Left cardiac atrium (tissue), 4 donors: ENCODE measurements at regions of chr6 and their contacts with region 1.

Region 1: DNA sequence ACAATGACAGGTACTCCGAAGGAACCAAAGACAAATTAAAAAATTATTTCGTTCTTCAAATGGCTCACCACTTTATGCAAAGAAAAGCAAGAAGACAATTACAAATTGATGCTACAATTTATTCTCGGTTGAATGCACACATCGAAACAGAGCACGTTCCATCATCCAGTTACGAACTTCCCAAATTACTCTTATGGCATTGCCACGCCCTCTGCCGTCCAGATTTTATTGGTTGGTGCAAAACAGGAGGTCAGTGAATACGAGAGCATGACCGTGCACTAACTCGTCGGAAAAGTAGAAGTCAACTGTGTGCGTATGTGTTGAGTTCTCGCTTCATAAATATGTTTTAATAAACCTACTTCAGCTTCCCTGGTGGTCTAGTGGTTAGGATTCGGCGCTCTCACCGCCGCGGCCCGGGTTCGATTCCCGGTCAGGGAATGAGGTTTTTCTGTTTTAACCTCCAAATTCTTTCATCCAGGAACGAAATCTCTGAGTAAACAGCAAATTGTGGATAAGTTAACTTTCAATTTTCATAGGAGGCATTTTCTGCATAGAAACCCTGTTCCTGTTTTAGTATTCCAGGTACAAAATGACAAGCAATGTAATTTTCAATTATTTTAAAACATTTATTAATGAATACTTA is 23.2 kb downstream of the ZNF311 start:
- DNase-seq: peak; percentile 79
- ATAC-seq: peak; percentile 85

Region 2: DNA sequence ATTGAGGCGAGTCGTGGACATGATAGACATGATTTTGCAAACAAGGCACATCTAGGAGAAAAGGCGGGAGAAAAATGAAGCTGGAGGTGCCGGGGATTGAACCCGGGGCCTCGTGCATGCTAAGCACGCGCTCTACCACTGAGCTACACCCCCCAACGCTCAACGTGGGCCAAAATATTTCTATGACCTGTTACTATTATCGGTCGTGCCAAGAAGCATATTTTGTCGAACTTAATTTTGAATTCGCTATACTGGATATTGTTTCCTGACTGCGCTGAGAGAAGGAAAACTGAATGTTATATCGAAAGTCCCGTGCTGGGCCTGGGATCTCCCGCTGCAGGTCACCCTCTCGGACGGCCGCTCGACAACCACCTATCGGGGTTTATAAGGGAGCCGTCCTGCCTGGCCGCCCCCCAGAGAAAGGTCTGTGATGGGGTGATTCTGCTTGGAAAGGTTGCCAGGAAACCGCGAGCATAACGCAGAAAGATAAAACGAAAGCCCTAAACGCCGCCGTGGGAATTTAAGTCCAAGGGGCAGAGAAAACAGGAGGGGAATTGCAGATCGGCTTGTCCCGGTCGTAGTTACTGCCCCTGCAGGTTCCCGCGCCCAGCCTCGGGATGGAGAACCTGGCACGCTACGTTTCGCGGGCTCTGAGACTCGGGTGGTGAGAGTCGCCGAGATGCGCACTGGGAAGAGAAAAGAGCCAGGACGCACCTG is 118.2 kb before region 1 on chr6:
- intact Hi-C with region 1: loop called in 1 of 2 experiments (anchors 10 kb)
- DNase-seq: peak; percentile 59
- ATAC-seq: peak; percentile 78 to 89

Region 3: GRCh38 chr6:28880894-28881780 is 100.8 kb before region 1 on chr6:
- intact Hi-C with region 1: loop called in 1 of 2 experiments (anchors 10 kb)
- DNase-seq: peak; percentile 68
- ATAC-seq: peak; percentile 86 to 88

Region 4: DNA sequence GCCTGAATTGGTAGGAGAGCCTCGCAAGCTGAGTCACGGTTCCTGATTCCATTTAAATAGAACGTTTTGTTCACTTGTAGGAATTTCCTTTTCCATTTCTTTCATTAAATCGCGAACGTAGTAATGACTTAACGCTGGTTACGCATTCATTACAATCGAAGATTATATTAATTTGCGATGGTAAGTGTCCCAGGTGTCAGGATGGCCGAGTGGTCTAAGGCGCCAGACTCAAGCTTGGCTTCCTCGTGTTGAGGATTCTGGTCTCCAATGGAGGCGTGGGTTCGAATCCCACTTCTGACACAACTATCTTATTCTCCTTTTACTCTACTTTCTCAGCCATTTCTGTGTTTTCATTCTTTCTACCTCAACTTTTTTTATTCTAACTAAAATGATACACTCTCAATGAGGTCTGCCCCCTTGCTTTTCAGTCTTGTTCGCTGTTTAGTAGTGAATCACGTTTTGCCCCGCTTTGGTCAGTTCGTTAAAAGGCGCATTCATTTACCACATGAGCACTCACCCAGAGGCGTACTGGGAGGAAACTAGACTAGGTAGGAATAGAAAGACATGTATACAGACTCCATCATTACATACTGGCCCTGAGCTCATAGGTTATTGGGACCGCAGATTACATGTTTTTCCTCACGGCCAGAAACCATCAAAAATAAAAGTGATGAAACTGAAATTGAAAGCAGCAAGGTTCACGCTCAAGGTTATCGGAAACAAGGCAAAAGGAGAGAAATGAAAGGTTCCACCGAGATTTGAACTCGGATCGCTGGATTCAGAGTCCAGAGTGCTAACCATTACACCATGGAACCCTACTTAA is 40.9 kb before region 1 on chr6:
- intact Hi-C with region 1: loop called (anchors 5 kb)
- DNase-seq: peak; percentile 77
- ATAC-seq: peak; percentile 75 to 93